Posterior cingulate gyrus (tissue), 11 donors: ENCODE measurements at regions of chr17 and their contacts with region 1.

Region 1: DNA sequence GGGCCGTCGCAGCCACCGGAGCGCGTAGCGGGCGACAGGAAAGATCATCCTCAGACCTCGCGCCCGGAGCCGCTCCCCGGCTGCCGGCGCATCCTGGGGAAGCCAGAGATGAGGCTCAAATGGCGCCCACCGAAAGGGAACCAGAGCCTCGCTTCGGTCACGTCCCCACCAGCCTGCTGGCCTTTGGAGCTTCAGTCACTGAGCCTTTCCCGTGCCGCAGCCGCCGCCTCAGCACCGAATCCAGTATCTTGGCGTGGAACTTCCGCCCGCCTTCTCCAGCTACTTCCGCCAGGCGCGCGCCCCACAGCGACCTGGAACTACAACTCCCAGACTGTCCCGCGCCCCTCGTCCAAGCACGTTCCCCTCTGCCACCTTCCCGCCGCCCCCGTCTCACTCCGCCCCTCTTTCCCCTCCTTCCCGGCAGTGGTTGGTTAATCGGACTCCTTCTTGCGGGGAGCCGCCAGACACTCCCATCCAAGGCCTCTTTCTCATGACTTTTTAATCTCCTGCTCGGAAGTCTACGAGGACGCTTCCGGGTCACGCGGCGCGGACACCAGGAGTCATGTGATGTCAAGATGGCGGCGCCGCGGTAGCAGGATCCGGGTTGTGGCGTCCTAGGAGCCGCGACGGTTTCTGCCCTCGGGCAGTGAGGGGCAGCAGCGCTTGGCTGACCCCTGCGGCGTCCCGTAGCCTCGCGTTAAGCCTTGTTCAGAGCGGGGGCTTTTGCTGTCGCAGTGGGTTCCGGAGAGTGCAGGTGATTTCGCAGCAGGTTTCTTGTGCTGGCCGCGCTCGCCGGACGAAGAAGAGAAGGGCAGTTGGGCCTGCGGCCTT is at the starts of genes SMCR8 and TOP3A:
- DNase-seq: peak; percentile 94 to 99 (median 97)

Region 2: DNA sequence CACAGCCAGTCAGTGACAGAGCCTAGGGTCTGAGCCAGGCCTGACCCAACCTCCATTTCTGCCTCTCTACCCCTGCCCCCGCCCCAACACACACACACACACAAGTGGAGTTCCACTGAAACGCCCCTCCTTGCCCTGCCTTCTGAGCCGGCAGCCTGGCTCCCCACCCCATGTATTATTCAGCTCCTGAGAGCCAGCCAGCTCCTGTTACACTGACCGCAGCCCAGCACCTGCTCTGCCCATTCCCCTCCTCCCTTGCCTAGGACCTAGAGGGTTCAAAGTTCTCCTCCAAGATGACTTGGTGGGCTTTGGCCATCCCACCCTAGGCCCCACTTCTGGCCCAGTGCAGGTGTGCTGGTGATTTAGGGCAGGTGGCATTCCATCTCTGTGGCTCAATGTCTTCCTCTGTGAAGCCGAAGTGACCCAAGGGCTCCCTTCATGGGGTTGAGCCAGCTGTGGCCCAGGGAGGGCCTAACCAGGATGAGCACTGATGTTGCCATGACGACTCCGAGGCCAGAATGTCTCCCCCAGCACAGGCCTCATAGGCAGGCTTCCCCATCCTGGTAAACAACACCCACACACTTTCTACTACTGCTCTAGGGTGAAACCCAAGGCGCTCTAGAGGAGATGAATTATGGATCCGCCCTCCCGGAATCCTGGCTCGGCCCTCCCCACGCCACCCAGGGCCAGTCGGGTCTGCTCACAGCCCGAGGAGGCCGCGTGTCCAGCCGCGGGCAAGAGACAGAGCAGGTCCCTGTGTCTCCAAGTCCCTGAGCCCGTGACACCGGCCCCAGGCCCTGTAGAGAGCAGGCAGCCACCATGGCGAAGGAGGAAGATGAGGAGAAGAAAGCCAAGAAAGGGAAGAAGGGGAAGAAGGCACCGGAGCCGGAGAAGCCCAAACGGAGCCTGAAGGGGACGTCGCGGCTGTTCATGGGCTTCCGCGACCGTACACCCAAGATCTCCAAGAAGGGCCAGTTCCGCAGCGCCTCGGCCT is 196.7 kb before region 1 on chr17:
- intact Hi-C with region 1: no loop called
- DNase-seq: no peak

Region 3: GRCh38 chr17:18225121-18225566 is 89.8 kb before region 1 on chr17:
- intact Hi-C with region 1: loop called (anchors 10 kb)
- DNase-seq: peak; percentile 90 to 100 (median 96)

Region 4: DNA sequence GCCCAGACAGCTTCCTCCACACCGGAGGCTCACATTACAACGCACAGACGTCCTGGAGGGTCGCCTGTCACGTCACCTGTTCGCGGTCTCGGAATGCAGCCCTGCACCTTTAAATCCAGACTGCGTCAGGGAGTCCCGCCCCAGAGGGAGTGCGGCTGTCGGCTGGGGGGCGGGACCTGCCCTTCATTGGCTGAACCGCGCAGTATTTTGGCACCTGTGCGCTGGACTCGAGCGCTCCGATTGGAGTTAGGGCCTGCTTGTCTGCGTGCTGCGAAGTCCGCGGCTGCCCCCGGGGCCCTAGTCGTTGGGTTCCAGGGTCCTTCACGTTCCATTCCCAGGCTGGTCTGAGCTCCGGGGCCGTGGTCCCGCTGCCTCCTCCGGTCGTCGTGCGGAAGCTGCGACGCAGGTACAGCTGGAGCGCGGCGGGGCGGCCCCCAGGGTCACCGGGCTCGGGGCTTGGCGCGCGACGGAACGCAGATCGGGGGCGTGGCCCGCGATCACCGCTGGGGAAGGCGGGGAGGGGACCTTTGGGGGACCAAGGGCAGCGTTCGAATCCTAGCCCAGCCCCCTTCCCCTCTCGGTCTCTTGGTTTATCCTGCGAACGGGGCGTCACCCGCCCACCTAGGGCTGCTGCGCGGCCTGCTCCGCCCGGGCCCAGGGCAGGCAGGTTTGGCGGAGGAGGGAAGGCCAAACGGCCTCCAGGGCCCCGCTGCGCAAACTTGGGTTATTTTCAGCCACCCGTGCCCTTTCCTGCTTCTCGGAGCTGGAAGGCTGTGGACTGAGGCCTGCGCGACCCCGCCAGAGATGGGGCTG is 54.4 kb before region 1 on chr17 and contains the start of gene MIEF2:
- intact Hi-C with region 1: loop called (anchors 2 kb)
- DNase-seq: peak; percentile 93 to 100 (median 96)

Region 5: GRCh38 chr17:18363101-18364049 is 48.4 kb after region 1 on chr17 and contains the start of gene SHMT1:
- intact Hi-C with region 1: loop called (anchors 5 kb)
- DNase-seq: peak; percentile 89 to 99 (median 94)